PC-3 (cell line): ENCODE measurements at regions of chr1 and their contacts with region 1.

Region 1: DNA sequence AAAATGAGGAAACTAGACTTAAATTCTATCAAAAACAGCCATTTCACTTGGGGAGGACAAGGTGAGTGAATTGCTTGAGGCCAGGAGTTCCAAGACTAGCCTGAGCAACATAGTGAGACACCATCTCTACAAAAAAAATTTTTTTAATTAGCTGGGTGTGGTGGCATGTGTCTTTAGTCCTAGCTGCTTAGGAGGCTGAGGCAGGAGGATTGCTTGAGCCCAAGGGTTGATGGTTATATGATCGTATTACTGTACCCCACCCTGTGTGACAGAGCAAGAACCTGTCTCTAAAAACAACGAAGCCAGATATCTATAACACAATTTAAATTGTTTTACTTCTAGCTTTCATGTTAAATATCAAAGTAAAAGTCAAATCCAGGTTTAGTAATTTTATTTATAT is 126.1 kb upstream of the HP1BP3 start:
- DNase-seq: no peak
- ATAC-seq: no peak
- H3K4me3 ChIP-seq: no peak overlapping the region
- H3K27ac ChIP-seq: no peak overlapping the region
- H3K4me1 ChIP-seq: no peaks in the 10 kb centered on the region
- H3K27me3 ChIP-seq: no peaks in the 10 kb centered on the region
- CTCF ChIP-seq: no peak

Region 2: GRCh38 chr1:20867847-20868246 is 45.4 kb before region 1 on chr1:
- CTCF ChIA-PET with region 1: no interaction called
- POLR2A ChIA-PET with region 1: interaction called, 10 read pairs
- intact Hi-C with region 1: no loop called
- DNase-seq: peak; percentile 27
- ATAC-seq: peak; percentile 42
- H3K4me3 ChIP-seq: no peak overlapping the region
- H3K27ac ChIP-seq: no peak overlapping the region
- H3K4me1 ChIP-seq: peaks cover 22% of the 10 kb centered on the region; the same call in 1 of the 2 replicates
- H3K27me3 ChIP-seq: no peaks in the 10 kb centered on the region
- CTCF ChIP-seq: no peak

Region 3: DNA sequence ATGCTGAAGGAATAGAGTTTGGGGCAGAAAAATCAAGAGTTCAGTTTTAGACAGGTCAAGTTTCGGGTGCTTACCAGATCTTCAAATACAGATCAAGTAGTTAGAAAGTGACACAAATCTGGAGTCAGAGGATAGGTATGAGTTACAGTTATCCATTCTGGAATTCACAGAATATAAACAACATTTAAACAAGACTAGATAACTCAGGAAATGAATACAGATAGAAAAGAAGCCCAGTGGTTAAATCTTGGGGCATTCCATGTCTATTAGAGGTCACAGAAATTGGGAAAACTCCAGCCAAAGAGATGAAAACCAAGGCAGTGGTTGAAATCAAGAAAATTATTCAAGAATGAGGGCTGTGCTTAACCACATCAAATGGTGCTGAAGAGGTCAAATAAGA is 60.8 kb after region 1 on chr1:
- CTCF ChIA-PET with region 1: no interaction called
- POLR2A ChIA-PET with region 1: no interaction called
- intact Hi-C with region 1: no loop called
- DNase-seq: no peak
- ATAC-seq: no peak
- H3K4me3 ChIP-seq: no peak overlapping the region
- H3K27ac ChIP-seq: no peak overlapping the region
- H3K4me1 ChIP-seq: no peaks in the 10 kb centered on the region
- H3K27me3 ChIP-seq: no peaks in the 10 kb centered on the region
- CTCF ChIP-seq: no peak